GM13977 (cell line): ENCODE measurements at regions of chr18 and their contacts with region 1.

Region 1: GRCh38 chr18:11178951-11179549 is 29.7 kb upstream of the PIEZO2 start:
- DNase-seq: no peak
- CTCF ChIP-seq: no peak

Region 2: DNA sequence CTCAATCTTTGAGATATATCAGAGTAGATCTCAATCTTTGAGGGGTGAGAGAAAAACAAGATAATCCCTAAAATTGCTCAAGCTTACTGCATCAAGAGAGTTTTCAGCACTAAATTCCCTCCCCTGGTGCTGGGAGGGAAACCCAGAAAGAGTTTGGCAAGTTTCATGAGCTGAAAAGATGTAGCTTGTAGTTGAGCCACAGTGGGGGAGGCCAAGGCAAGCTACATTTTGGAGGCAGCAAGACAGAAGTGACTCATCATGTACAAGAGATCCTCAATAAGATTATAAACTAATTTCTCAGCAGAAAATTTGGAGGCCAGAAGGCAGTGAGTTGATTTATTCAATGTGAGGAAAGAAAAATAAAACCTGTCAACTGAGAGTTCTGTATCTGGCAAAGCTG is 337.8 kb before region 1 on chr18:
- in situ Hi-C with region 1: no loop called
- DNase-seq: no peak
- CTCF ChIP-seq: no peak

Region 3: GRCh38 chr18:10912790-10913545 is 266.1 kb before region 1 on chr18:
- in situ Hi-C with region 1: no loop called
- DNase-seq: no peak
- CTCF ChIP-seq: no peak

Region 4: DNA sequence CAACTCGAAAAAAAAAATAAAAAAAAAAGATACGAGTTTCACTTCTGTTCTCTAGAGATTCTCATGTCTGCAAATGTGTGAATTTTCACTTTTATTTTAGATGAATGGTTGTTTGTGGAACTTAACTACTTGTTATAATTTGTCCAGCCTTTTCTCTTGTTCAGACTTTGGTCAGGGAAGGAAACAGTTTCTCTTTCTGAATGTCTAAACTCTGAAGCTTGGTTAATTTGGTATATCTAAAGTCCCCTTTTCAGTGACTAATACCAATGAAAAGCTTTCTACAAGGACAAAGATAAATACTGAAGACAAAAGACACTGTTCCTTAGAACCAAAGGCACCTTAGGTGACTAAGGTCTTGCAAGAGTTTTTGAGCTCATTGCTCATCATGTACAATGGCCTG is 114.7 kb after region 1 on chr18:
- in situ Hi-C with region 1: loop called (anchors 25 kb)
- DNase-seq: peak; percentile 31
- CTCF ChIP-seq: no peak